Activated CD4-positive, alpha-beta T cell treated with anti-CD3 and anti-CD28 coated beads, Interleukin-2, amount 10 ng/mL, durations not matched to agents 24 days and 14 days (primary cell): ENCODE measurements at regions of chr22 and their contacts with region 1.

Region 1: DNA sequence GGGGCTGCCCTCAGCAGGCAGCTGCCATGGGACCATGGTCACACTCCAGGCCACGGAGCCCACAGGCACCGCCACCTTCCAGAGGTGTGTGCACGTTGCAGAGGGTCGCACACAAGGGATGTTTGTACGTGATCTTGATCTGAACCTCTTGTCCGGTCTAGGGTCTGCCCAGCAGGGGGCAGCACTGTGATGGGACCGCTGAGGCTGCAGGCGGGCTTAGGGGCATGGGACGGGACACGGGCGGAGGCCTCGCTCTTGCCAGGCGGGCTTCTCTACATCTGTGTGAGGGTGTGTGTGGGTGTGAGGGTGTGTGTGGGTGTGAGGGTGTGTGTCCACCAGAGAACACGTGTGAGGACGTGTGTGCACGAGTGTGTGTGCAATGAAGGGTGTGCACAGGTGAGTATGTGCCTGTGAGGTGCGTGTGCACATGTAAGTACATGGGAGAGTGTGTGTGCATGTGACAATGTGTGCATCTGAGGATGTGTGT is 52.4 kb downstream of the CACNA1I start:
- DNase-seq: peak; percentile 89
- H3K4me3 Mint-ChIP-seq: no peak overlapping the region
- H3K27ac Mint-ChIP-seq: no peak overlapping the region
- H3K4me1 Mint-ChIP-seq: peaks cover 5% of the 10 kb centered on the region
- H3K27me3 Mint-ChIP-seq: peaks cover 6% of the 10 kb centered on the region

Region 2: GRCh38 chr22:39634671-39635405 is 11.9 kb after region 1 on chr22:
- intact Hi-C with region 1: no loop called
- DNase-seq: no peak
- H3K4me3 Mint-ChIP-seq: no peak overlapping the region
- H3K27ac Mint-ChIP-seq: no peak overlapping the region
- H3K4me1 Mint-ChIP-seq: peaks cover 7% of the 10 kb centered on the region
- H3K27me3 Mint-ChIP-seq: peaks cover 3% of the 10 kb centered on the region

Region 3: DNA sequence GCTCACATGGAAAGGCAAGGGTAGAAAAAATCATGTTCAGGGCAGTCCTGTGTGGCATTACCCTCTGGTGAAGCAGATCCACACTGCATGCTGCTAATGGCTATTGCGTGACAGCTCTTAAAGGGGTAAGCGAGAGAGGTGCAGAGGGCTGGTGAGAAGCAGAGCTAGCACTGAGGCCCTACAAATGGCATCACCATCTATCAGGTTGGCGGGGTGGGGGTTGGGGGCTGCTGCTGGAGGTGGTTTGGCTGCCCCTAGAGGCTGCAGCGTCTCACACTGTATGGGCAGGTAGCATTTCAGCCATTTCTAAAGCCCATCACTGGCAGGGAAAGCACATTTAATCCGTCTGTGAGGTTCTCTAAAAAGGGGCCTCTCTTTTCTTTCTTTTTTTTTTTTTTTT is 320.4 kb after region 1 on chr22:
- intact Hi-C with region 1: loop called (anchors 5 kb)
- DNase-seq: no peak
- H3K4me3 Mint-ChIP-seq: peak overlapping the region; percentile 23
- H3K27ac Mint-ChIP-seq: peak overlapping the region; percentile 74
- H3K4me1 Mint-ChIP-seq: peaks cover 66% of the 10 kb centered on the region
- H3K27me3 Mint-ChIP-seq: no peaks in the 10 kb centered on the region

Region 4: DNA sequence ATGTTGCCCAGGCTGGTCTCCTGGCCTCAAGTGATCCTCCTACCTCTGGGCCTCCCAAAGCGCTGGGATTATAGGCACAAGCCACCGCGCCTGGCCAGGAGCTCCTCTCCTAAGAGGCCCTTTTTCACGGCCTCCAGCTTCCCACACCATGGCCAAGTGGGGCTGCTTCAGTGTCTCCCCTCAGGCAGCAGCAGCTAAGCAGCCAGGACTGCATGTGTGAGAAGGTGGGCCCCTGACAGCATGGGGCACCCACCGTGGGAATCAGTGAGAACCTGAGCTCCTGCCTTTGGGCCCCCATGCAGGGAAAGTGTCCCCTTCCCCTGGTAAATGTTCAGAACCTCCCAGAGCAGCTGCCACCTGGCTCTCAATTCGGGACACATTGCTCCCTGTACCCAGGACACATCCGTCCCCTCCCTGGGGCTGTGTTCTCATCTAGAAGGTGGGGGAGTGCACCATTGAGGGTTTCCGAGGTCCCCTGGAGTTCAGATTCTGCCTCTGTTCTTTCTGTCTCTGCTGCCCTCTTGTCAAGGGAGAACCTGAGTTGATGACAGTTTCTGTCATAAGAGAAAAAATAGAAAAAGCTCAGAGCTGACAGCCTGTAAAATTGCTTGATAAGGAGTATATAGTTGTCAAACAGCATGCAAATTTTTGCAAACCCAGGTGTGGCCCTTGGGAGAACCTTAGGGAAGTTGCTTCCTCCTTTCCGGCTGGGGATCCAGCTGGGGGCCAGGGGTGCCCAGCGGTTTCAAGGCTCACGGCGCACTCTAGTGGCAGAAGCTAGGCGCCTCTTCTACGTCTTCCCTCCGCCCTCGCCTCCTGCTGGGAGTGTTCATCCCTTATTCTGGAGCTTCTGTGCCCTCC is 401.5 kb after region 1 on chr22:
- intact Hi-C with region 1: loop called (anchors 10 kb)
- DNase-seq: peak; percentile 87
- H3K4me3 Mint-ChIP-seq: no peak overlapping the region
- H3K27ac Mint-ChIP-seq: no peak overlapping the region
- H3K4me1 Mint-ChIP-seq: peaks cover 2% of the 10 kb centered on the region
- H3K27me3 Mint-ChIP-seq: no peaks in the 10 kb centered on the region